K562 (cell line): ENCODE measurements at regions of chr9 and their contacts with region 1.

Region 1: GRCh38 chr9:326667-327066 is 112.0 kb downstream of the DOCK8 start:
- DNase-seq: no peak
- ATAC-seq: peak; percentile 52; the same call in 2 of the 3 replicates
- H3K4me3 ChIP-seq: no peak overlapping the region
- H3K27ac ChIP-seq: no peak overlapping the region
- H3K4me1 ChIP-seq: no peaks in the 10 kb centered on the region
- H3K27me3 ChIP-seq: no peaks in the 10 kb centered on the region
- CTCF ChIP-seq: no peak
- EP300 ChIP-seq: no peak
- POLR2A ChIP-seq: no peak
- RAD21 ChIP-seq: no peak

Region 2: GRCh38 chr9:700365-701282 is 374.0 kb after region 1 on chr9:
- CTCF ChIA-PET with region 1: no interaction called
- POLR2A ChIA-PET with region 1: no interaction called
- in situ Hi-C with region 1: no loop called
- intact Hi-C with region 1: loop called (anchors 5 kb)
- DNase-seq: no peak
- ATAC-seq: no peak
- H3K4me3 ChIP-seq: no peak overlapping the region
- H3K27ac ChIP-seq: no peak overlapping the region
- H3K4me1 ChIP-seq: no peaks in the 10 kb centered on the region
- H3K27me3 ChIP-seq: no peaks in the 10 kb centered on the region; a peak in 2 of 5 replicates
- CTCF ChIP-seq: no peak
- EP300 ChIP-seq: no peak
- POLR2A ChIP-seq: no peak
- RAD21 ChIP-seq: no peak